Lower leg skin (tissue), 4 donors: ENCODE measurements at regions of chr17 and their contacts with region 1.

Region 1: GRCh38 chr17:10705727-10706126 is 8.3 kb downstream of the ADPRM start:
- DNase-seq: no peak
- H3K4me3 ChIP-seq: no peak overlapping the region
- CTCF ChIP-seq: no peak
- POLR2A ChIP-seq: no peak

Region 2: DNA sequence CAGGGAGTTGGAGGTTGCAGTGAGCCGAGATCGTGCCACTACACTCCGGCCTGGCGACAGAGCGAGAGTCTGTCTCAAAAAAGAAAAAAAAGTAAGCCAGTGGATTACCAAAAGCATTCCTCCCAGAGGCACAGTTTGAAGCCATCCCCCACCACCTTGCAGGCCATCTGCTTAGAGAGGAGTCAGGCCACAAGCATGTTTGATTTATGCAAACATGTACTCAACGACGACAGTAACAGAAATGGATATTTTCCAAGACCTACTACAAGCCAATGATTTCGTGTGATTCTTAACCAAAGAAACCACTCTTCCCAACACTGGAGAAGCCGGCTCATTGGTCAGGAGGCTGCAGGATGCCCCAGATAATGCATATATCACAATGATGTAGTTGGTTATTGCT is 367.8 kb before region 1 on chr17:
- intact Hi-C with region 1: no loop called
- DNase-seq: no peak
- H3K4me3 ChIP-seq: no peak overlapping the region
- CTCF ChIP-seq: no peak
- POLR2A ChIP-seq: no peak

Region 3: GRCh38 chr17:11318207-11318606 is 612.5 kb after region 1 on chr17:
- intact Hi-C with region 1: loop called (anchors 5 kb)
- DNase-seq: peak in 1 of 2 donors; percentile 67
- H3K4me3 ChIP-seq: no peak overlapping the region
- CTCF ChIP-seq: no peak
- POLR2A ChIP-seq: no peak